Natural killer cell (primary cell): ENCODE measurements at regions of chr11 and their contacts with region 1.

Region 1: DNA sequence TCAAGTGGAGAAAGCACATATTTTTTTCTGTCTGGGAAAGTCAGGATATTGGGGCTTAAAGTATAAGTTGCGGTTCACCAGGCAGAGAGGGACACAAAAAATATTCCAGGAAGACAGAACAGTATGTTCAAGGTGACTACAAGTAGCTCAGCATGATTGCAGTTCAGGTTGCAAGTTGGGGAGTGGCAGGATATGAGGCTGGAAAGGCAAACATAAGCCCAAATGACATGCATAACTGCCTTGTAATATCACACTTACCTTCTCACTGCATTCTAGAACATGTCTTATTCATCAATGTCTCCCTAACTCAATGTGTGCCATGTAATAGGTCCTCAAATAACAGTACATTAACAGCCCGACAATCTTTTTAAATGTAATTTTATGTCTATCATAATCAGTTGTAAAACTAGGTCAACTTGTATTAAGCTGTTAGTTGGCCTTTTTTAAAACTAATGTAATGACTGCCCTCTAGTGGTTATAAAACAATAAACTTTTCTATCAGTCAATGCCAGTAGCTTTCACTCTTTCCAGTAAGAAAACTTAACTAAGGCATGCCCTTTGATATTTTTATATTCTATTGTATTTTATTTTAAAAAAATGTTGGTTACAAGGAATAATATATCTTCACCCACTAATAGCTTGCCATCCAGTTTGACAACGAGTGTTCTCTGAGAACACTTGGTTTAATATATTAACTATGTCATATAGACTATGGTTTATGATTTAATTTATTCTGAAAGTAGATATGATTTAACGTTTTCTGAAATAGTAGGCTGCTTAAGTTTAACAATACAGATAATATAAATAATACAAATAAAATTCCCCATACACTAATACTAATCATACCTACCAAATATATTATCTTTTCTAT is 39.4 kb upstream of the CFAP300 start:
- DNase-seq: peak in 1 of 2 donors; percentile 47
- ATAC-seq: peak in 2 of 3 donors; percentile 57 to 73
- H3K4me3 ChIP-seq: no peak overlapping the region
- H3K4me3 Mint-ChIP-seq: no peak overlapping the region
- H3K27ac ChIP-seq: no peak overlapping the region
- H3K27ac Mint-ChIP-seq: no peak overlapping the region
- H3K4me1 ChIP-seq: no peaks in the 10 kb centered on the region
- H3K4me1 Mint-ChIP-seq: no peaks in the 10 kb centered on the region
- H3K27me3 ChIP-seq: no peaks in the 10 kb centered on the region
- H3K27me3 Mint-ChIP-seq: peaks cover 12 to 16% of the 10 kb centered on the region in 2 donors
- CTCF ChIP-seq: peak; percentile 78

Region 2: GRCh38 chr11:101860696-101861427 is 146.9 kb before region 1 on chr11:
- intact Hi-C with region 1: loop called (anchors 1 kb)
- DNase-seq: peak; percentile 14 to 56
- ATAC-seq: peak; percentile 59 to 84 (median 76)
- H3K4me3 ChIP-seq: no peak overlapping the region
- H3K4me3 Mint-ChIP-seq: no peak overlapping the region
- H3K27ac ChIP-seq: no peak overlapping the region
- H3K27ac Mint-ChIP-seq: no peak overlapping the region
- H3K4me1 ChIP-seq: no peaks in the 10 kb centered on the region
- H3K4me1 Mint-ChIP-seq: no peaks in the 10 kb centered on the region
- H3K27me3 ChIP-seq: no peaks in the 10 kb centered on the region
- H3K27me3 Mint-ChIP-seq: peaks cover 0 to 7% of the 10 kb centered on the region in 2 donors
- CTCF ChIP-seq: peak; percentile 49

Region 3: GRCh38 chr11:101912823-101913284 is 94.9 kb before region 1 on chr11:
- intact Hi-C with region 1: no loop called
- DNase-seq: no peak
- ATAC-seq: no peak
- H3K4me3 ChIP-seq: no peak overlapping the region
- H3K4me3 Mint-ChIP-seq: no peak overlapping the region
- H3K27ac ChIP-seq: no peak overlapping the region
- H3K27ac Mint-ChIP-seq: no peak overlapping the region
- H3K4me1 ChIP-seq: peaks cover 11% of the 10 kb centered on the region
- H3K4me1 Mint-ChIP-seq: peaks cover 30 to 33% of the 10 kb centered on the region in 2 donors
- H3K27me3 ChIP-seq: no peaks in the 10 kb centered on the region
- H3K27me3 Mint-ChIP-seq: peaks cover 0 to 3% of the 10 kb centered on the region in 2 donors
- CTCF ChIP-seq: no peak